ENCODE measurements at regions of chr6 and their contacts with region 1.

Region 1: DNA sequence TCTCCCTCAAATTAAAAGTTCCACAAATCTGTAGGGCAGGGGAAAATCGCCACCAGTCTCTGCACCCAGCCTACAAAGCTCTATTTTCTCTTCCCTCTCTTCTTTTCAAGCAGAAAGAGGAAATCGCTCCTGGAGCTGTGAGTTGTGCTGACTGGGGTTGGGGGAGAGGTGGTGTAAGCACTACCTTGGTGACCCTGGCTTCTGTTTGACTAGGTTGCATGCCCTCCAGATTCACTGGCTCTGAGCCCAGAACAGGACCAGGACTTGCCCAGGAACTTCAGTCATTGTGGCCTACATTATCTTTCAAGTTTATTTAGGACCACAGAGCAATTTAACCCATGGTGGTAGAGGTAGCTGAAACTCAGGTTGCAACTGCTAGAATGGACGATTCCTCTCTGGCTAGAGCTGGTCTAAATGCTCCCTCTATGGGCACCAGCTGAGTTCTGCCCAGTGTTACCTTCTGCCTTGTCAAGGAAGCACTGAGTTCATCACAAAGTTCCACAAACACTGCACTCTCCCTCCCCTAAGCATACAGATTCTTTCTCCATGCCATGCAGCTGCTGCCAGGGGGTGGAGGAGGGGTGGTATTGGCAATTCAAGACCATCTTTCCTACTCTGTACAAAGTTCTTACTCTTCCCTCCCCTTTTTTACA is 122.0 kb upstream of the BMP5 start:
- DNase-seq: no peak
- H3K4me3 ChIP-seq: no peak overlapping the region
- H3K27ac ChIP-seq: no peak overlapping the region
- H3K4me1 ChIP-seq: no peaks in the 10 kb centered on the region
- H3K27me3 ChIP-seq: peaks cover under 1% of the 10 kb centered on the region
- CTCF ChIP-seq: no peak

Region 2: DNA sequence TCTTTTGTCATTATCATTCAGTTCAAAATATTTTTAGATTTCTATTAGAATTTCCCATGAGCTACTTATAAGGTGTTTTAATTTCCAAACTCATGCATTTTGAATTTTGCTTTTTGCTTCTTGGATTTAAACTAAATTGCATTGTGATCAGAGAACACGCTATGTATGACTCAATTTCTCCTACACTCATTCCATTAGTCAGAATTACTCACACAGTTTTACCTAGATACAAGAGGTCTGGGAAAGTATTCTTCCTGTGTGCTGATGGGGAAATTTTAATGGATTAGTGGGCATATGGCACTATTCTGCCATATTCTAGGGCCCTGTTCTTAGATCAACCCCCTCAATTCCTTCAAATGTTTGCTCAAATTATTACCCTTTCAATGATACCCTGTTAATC is 72.1 kb before region 1 on chr6:
- CTCF ChIA-PET with region 1: no interaction called
- dilution Hi-C with region 1: no loop called
- in situ Hi-C with region 1: no loop called
- intact Hi-C with region 1: no loop called
- DNase-seq: peak; percentile 85
- H3K4me3 ChIP-seq: no peak overlapping the region
- H3K27ac ChIP-seq: peak overlapping the region; percentile 69
- H3K4me1 ChIP-seq: peaks cover 3% of the 10 kb centered on the region
- H3K27me3 ChIP-seq: no peaks in the 10 kb centered on the region
- CTCF ChIP-seq: no peak

Region 3: GRCh38 chr6:56115715-56116114 is 118.4 kb after region 1 on chr6:
- CTCF ChIA-PET with region 1: no interaction called
- dilution Hi-C with region 1: no loop called
- in situ Hi-C with region 1: no loop called
- intact Hi-C with region 1: loop called (anchors 5 kb)
- DNase-seq: no peak
- H3K4me3 ChIP-seq: no peak overlapping the region
- H3K27ac ChIP-seq: no peak overlapping the region
- H3K4me1 ChIP-seq: no peaks in the 10 kb centered on the region
- H3K27me3 ChIP-seq: no peaks in the 10 kb centered on the region
- CTCF ChIP-seq: no peak